ENCODE measurements at regions of chr2 and their contacts with region 1.

Region 1: DNA sequence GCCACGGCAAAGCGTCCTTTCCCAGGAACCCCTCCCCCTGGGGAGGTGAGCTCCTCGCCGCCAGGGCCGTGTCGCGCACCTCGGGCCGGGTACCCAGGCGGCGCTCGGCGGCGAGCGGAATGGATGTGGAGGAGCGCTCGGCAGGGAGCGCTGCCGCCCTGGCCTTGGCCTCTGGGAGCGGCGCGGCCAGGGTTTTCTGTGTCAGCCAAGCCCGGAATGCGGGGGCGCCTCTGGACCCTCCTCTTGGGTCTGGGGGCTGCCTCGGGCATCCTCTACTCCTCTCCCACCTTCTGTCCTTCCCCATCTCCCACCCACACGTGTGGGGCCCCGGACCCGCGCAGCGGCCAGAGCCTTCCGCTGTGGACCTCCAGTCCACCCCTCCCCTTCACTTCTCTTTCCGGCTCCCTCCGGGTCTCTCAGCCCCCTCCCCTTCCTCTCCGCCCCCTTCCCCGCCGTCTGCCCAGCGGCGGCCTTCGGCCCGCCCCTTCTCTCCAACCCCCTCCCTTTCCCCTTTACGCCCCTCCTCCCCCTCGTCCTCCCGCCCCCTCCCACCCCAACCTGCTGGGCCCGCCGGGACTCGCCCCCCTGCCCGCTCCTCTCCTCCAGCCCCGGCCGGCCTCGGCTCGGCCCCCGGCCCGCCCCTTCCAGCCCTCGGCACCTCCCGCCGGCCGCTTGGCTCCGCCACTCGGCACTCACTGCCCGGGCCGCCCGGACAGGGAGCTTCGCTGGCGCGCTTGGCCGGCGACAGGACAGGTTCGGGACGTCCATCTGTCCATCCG is at the start of gene MERTK:
- DNase-seq: peak; percentile 95 to 96
- ATAC-seq: peak; percentile 96
- H3K4me3 ChIP-seq: peak within 1 kb of the TSS; percentile 50 to 96
- H3K27ac ChIP-seq: peak within 1 kb of the TSS; percentile 73 to 93
- H3K4me1 ChIP-seq: no peaks in the 10 kb centered on the region
- H3K27me3 ChIP-seq: no peaks in the 10 kb centered on the region
- total RNA-seq, gene MERTK: 29.7 to 61.3 TPM

Region 2: DNA sequence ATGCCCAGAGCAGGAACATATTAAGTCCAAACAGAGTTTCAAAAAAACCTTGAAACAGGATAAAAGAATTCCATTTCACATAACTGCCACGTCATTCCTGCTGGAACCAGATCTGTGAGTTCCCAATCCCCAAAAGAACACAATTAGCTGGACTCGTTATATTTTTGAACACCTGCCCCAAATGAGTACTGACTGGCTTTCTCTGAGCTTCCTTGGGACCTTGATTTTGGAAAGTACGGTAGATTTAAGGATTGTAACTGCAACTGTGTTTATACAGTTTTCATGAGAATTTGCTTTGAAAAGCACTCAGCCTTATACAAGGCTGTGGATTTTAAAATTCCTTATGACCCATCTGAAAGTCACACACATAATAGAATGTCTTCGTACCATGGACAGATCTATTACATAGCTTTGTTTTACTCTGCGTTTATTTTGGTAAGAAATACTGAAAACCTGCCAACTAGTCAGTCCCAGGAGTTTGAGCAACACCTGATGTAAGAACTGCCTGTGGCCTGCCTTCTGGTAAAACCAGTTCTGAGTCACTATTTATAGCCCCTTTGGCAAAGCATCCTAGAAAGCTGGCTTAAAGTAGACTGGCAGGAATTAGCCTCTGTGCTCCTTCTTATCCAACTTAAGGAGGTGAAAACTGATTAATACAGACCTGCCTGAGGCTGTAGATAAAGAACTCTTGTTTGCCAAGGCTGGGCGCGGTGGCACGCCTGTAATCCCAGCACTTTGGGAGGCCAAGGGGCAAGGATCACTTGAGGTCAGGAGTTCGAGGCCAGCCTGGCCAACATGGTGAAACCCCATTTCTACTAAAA is 48.4 kb after region 1 on chr2:
- intact Hi-C with region 1: loop called (anchors 5 to 10 kb)
- DNase-seq: no peak
- ATAC-seq: peak; percentile 84
- H3K4me3 ChIP-seq: no peak overlapping the region
- H3K27ac ChIP-seq: peak overlapping the region; percentile 29 to 67
- H3K4me1 ChIP-seq: peaks cover 0 to 3% of the 10 kb centered on the region in 2 donors
- H3K27me3 ChIP-seq: no peaks in the 10 kb centered on the region

Region 3: DNA sequence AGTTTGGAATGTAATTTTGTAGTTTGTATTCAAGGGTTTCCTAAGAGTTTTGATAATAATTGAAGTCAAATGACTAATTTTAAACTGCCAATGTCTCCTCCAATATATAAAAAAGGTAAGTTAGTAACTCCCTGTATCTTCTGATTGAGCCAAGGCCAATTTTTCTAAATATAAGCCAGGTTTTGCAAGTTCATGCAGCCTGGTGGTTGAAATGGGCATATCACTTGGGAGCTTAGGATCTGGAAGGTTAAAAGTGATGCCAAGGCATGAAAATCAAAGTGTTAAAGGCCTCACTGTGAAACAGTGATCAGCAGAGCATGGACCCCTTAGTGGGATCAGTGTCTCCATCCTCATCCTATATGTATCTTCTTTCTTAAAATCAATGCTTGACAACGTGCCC is 60.8 kb after region 1 on chr2:
- intact Hi-C with region 1: loop called in 1 of 2 experiments (anchors 10 kb)
- DNase-seq: no peak
- ATAC-seq: no peak
- H3K4me3 ChIP-seq: no peak overlapping the region
- H3K27ac ChIP-seq: no peak overlapping the region
- H3K4me1 ChIP-seq: peaks cover 0 to 7% of the 10 kb centered on the region in 2 donors
- H3K27me3 ChIP-seq: no peaks in the 10 kb centered on the region

Region 4: GRCh38 chr2:111975053-111975552 is 77.0 kb after region 1 on chr2:
- intact Hi-C with region 1: loop called (anchors 2 to 5 kb)
- DNase-seq: peak; percentile 69 to 84
- ATAC-seq: peak; percentile 52
- H3K4me3 ChIP-seq: no peak overlapping the region
- H3K27ac ChIP-seq: peak overlapping the region in 1 of 2 donors; percentile 52
- H3K4me1 ChIP-seq: peaks cover 2 to 16% of the 10 kb centered on the region in 2 donors
- H3K27me3 ChIP-seq: no peaks in the 10 kb centered on the region

Region 5: DNA sequence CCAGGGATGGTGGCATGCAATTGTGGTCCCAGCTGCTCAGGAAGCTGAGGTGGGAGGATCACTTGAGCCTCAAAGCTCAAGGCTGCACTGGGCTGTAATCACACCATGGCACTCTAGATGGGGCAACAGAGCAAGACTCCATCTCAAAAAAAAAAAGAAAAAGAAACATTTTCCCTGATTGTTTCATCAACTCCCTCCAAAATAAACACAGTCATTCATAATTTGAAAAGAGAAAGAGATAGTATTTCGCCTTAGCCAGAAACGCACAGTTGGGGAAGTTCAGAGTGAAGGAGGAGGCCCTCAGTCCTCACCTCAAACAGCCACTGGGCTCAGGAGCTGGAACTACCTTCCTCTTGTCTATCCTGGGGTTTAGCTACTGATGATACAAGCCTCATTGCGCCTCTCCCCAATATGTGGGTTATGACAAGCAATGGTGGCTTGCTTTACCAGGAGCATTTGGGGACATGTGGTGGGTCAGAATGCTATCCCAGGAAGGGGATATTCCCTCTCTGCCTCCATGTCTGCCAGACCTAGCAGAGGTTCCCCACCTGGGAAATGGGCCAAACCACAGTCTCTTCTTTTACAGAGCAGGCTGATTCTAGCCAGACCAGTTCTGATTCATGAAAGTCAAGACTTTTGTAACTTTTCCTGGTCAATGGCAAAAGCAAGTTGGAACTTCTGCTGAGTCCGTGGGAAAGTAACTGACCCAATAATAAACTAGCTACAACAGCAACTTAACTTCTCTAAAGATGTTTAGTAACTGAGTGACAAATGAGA is 134.8 kb after region 1 on chr2:
- intact Hi-C with region 1: loop called in 1 of 2 experiments (anchors 5 kb)
- DNase-seq: peak in 1 of 2 donors; percentile 83
- ATAC-seq: peak; percentile 59
- H3K4me3 ChIP-seq: no peak overlapping the region
- H3K27ac ChIP-seq: peak overlapping the region in 1 of 2 donors; percentile 64
- H3K4me1 ChIP-seq: no peaks in the 10 kb centered on the region
- H3K27me3 ChIP-seq: no peaks in the 10 kb centered on the region

Region 6: GRCh38 chr2:112054847-112055729 is 157.0 kb after region 1 on chr2 and contains the start of gene TMEM87B:
- intact Hi-C with region 1: loop called in 1 of 2 experiments (anchors 2 kb)
- DNase-seq: peak; percentile 99 to 100
- ATAC-seq: peak; percentile 94
- H3K4me3 ChIP-seq: peak within 1 kb of the TSS; percentile 64 to 78
- H3K27ac ChIP-seq: peak within 1 kb of the TSS; percentile 28 to 93
- H3K4me1 ChIP-seq: no peaks in the 10 kb centered on the region
- H3K27me3 ChIP-seq: no peaks in the 10 kb centered on the region
- total RNA-seq, gene TMEM87B: 28.3 to 31.5 TPM

Region 7: GRCh38 chr2:112075490-112076260 is 177.6 kb after region 1 on chr2:
- intact Hi-C with region 1: no loop called
- DNase-seq: no peak
- ATAC-seq: no peak
- H3K4me3 ChIP-seq: no peak overlapping the region
- H3K27ac ChIP-seq: no peak overlapping the region
- H3K4me1 ChIP-seq: no peaks in the 10 kb centered on the region
- H3K27me3 ChIP-seq: peaks cover 0 to 2% of the 10 kb centered on the region in 2 donors

Measured in aorta (tissue), 5 donors.